Aorta (tissue), 5 donors: ENCODE measurements at regions of chr21 and their contacts with region 1.

Region 1: GRCh38 chr21:41726945-41727783 is 39.7 kb downstream of the RIPK4 start:
- DNase-seq: peak; percentile 92 to 96
- ATAC-seq: peak; percentile 90
- H3K4me3 ChIP-seq: no peak overlapping the region
- H3K27ac ChIP-seq: peak overlapping the region; percentile 64 to 89
- H3K4me1 ChIP-seq: no peaks in the 10 kb centered on the region
- H3K27me3 ChIP-seq: no peaks in the 10 kb centered on the region

Region 2: DNA sequence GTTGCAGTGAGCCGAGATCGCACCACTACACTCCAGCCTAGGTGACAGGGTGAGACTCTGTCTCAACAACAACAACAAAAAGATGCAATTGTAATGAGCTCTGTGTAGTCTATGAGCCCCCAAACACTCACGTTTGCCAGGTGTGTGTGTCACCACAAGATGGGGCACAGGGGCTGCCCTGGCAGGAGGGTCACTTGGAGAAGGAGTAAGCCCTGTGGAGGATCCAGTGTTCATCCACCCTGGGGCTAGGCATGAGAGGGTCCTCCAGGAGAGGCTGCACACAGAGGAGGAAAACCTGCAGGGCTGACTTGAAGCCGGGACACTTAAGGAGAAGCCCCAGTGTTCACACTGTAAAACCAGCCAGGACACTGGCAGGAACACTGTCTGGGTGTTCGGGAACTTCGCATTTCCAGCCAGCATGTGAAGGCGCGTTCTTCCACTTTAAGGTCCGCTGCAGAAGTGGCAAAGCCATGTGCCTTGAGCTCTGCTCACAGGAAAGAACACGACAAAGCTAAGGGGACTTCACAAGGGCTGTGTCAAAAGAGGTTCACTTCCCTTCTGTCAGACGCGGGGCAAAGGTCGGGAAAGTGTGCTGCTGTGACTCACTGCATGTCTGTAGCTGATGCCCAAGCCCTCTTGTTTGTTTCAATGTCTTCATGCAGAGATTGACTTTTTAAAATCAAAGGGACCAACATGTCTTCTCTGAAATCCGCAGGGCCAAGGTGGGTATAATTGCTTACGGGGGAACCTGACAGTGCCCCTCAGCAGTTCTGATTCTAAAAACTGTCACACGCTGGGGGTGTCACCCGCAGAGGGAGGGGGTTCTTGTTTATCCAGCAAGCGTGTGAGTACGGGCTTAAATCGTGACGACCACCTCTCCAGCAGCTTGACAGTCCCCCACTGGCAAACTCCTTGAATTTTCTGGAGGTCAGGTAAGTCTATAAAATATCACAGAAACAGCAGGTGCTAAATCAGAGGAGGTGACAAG is 63.1 kb before region 1 on chr21:
- intact Hi-C with region 1: loop called in 1 of 2 experiments (anchors 5 kb)
- DNase-seq: no peak
- ATAC-seq: no peak
- H3K4me3 ChIP-seq: no peak overlapping the region
- H3K27ac ChIP-seq: no peak overlapping the region
- H3K4me1 ChIP-seq: peaks cover 0 to 2% of the 10 kb centered on the region in 2 donors
- H3K27me3 ChIP-seq: no peaks in the 10 kb centered on the region

Region 3: GRCh38 chr21:41684381-41685245 is 42.6 kb before region 1 on chr21:
- intact Hi-C with region 1: loop called in 1 of 2 experiments (anchors 5 kb)
- DNase-seq: peak; percentile 29 to 70
- ATAC-seq: no peak
- H3K4me3 ChIP-seq: no peak overlapping the region
- H3K27ac ChIP-seq: no peak overlapping the region
- H3K4me1 ChIP-seq: no peaks in the 10 kb centered on the region
- H3K27me3 ChIP-seq: no peaks in the 10 kb centered on the region

Region 4: GRCh38 chr21:41768437-41769061 is 41.4 kb after region 1 on chr21:
- intact Hi-C with region 1: loop called (anchors 5 kb)
- DNase-seq: peak in 1 of 2 donors; percentile 75
- ATAC-seq: no peak
- H3K4me3 ChIP-seq: peak overlapping the region; percentile 12 to 57
- H3K27ac ChIP-seq: peak overlapping the region in 1 of 2 donors; percentile 60
- H3K4me1 ChIP-seq: no peaks in the 10 kb centered on the region
- H3K27me3 ChIP-seq: no peaks in the 10 kb centered on the region

Region 5: DNA sequence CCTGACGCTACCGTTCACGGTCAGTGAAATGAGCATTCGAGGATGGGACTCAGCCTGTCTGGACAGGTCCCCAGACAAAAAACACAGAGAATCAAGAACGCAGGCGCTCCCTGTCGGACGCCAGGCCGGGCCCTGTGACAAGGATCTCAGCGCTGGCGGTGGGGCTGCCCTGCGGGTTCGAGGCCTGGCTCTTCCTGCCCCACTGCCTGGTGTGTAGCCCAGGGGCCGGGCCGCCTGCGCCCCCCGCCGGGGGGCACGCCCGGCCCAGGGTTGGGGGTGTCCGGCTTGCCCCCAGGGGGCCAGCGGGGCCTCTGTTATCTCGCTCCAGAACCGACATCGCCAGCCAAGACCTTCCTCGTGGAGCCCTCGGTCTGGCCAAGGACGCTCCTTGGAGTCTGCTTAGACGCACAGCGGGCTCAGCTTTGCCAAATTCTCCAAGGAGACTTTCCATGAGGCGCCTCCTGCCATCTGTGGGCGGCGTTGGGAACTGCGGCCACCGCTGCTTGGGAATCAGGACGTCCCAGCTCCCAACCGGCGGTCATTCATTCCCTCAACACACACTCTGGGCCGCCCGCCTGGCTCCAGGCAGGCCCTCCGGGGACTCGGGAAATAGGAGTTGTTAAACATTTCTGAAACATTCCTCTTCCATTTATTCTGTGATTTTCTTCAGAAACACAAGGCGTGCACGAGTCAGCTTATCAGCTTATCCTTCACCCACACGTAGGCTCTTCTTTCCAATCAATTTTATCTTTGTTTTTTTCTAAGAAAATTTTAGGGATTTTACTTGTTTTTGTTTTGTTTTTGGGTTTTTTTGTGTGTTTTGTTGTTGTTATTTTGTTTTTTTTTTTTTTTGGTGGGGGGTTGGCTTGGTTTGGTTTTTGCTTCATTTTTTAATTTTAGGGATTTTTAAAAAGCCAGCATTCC is 51.0 kb after region 1 on chr21:
- intact Hi-C with region 1: loop called in 1 of 2 experiments (anchors 5 kb)
- DNase-seq: peak; percentile 92 to 97
- ATAC-seq: peak; percentile 92
- H3K4me3 ChIP-seq: no peak overlapping the region
- H3K27ac ChIP-seq: peak overlapping the region in 1 of 2 donors; percentile 72
- H3K4me1 ChIP-seq: no peaks in the 10 kb centered on the region
- H3K27me3 ChIP-seq: no peaks in the 10 kb centered on the region